ENCODE measurements at regions of chr13 and their contacts with region 1.

Region 1: DNA sequence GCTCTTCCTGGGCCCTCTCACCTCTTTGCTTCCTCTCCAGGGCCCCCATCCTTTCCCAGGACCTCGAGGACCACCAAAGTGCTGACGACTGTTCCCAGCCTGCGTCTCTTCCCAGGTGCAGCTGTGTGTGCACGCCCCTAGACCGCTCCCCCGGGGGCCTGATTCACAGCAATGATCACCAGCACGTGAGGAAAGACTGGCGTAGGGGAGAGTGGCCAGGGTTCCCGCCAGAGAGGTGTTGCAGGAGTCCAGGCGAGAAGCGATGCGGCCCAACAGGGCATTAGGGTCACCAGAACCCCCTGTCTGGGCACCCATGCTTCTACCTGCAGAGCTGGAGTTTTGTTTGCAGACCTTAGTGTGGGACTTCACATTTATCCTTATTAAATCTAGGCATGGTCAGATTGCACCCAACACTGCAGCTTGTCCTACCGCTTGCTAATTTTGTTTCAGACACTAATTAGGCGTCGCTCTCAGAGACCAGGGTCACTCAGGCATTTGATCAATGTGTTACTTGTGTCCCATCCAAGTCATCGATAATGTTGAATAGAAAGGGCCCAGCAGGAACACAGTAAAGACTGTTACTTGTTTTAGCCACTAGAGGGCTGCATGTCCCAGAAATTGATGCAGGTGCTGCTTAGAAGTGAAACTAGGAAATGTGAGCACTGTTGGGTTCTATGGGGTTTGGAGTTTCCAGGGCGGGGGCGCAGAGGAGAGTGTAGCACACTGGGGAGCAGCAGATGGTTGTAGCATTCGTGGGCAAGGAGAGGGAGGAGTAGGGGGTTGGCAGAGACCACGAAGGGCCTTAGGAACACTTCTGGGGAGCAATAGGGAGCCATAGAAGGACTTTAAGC is 53.2 kb downstream of the CDADC1 start:
- DNase-seq: peak; percentile 77
- H3K4me3 Mint-ChIP-seq: peak overlapping the region; percentile 27
- H3K27ac Mint-ChIP-seq: peak overlapping the region; percentile 46
- H3K4me1 Mint-ChIP-seq: peaks cover 21% of the 10 kb centered on the region
- H3K27me3 Mint-ChIP-seq: peaks cover 4% of the 10 kb centered on the region

Region 2: DNA sequence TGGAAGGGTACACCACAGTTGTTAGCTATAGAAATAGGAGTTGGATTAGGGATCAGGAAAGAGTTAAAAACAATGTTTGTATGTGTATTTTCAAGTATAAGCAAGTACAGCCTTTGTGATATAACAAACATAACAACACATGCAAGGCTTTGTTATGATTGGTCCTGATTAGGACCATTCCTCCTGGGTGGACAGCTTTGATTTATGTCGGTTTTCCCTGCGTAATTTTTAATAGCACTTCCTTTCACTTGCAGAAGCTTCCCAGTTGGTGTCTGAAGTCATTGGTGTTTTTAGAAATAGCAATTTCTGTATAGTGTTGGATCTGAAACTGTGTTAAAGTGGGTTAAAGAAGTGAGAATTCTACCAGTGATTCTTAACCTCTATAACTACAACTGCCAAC is 315.2 kb before region 1 on chr13:
- CTCF ChIA-PET with region 1: no interaction called
- DNase-seq: no peak
- H3K4me3 Mint-ChIP-seq: no peak overlapping the region
- H3K27ac Mint-ChIP-seq: peak overlapping the region; percentile 47
- H3K4me1 Mint-ChIP-seq: peaks cover 9% of the 10 kb centered on the region
- H3K27me3 Mint-ChIP-seq: no peaks in the 10 kb centered on the region

Region 3: DNA sequence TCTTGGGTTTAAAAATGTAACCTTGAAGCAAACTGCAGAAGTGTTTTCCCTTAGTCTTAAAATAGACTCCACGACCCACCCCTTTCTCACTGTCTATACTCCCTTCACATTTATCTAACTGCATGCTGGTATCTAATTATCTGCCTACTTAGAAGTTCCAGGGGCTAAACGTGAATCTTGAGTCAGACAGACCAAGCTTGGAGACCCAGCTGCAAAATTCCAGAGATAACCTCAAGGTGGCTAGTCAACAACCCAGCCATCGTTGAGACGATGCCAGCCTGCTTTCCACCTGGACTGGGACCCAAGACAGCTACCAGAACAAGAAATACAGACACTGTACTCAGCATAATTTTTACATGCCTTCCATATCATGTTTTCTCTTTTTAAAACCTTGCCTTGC is 28.9 kb after region 1 on chr13:
- CTCF ChIA-PET with region 1: no interaction called
- DNase-seq: no peak
- H3K4me3 Mint-ChIP-seq: no peak overlapping the region
- H3K27ac Mint-ChIP-seq: no peak overlapping the region
- H3K4me1 Mint-ChIP-seq: no peaks in the 10 kb centered on the region
- H3K27me3 Mint-ChIP-seq: peaks cover 5% of the 10 kb centered on the region

Region 4: DNA sequence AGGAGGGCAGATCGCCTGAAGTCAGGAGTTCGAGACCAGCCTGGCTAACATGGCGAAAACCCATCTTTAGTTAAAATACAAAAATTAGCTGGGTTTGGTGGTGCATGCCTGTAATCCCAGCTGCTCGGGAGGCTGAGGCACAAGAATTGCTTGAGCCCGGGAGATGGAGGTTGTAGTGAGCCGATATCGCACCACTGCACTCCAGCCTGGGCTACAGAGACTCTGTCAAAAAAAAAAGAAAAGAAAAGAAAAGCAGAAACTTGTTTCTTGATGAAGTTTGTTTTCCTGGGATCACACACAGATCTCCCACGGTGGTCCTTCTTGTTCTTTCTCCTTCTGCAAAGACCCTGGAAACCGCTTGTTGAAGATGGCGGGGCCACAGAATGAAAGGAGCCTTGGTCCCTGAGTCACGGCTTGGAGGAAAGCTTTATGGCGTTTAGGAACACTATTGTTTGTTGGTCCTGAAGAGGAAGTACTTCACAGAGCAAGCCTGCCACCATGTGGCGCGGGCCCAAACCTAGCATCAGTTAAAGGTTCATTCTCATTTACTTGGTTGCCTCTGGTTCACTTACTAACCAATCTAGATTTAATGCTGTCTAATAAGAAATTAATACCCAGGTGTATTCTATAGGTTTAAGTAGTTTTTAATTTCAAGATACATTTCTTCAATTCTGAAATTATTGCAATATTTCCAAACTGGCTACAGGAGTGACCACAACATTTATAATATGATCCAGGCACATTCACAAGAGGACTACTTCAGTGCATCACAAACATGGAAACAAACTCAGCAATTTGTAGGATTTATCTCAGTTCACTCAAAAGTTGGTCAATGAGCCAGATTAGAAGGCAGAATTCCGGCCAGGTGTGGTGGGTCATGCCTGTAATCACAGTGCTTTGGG is 306.0 kb after region 1 on chr13:
- CTCF ChIA-PET with region 1: interaction called, 14 read pairs
- DNase-seq: peak; percentile 88
- H3K4me3 Mint-ChIP-seq: peak overlapping the region; percentile 76
- H3K27ac Mint-ChIP-seq: peak overlapping the region; percentile 8
- H3K4me1 Mint-ChIP-seq: peaks cover 5% of the 10 kb centered on the region
- H3K27me3 Mint-ChIP-seq: peaks cover 6% of the 10 kb centered on the region

Region 5: DNA sequence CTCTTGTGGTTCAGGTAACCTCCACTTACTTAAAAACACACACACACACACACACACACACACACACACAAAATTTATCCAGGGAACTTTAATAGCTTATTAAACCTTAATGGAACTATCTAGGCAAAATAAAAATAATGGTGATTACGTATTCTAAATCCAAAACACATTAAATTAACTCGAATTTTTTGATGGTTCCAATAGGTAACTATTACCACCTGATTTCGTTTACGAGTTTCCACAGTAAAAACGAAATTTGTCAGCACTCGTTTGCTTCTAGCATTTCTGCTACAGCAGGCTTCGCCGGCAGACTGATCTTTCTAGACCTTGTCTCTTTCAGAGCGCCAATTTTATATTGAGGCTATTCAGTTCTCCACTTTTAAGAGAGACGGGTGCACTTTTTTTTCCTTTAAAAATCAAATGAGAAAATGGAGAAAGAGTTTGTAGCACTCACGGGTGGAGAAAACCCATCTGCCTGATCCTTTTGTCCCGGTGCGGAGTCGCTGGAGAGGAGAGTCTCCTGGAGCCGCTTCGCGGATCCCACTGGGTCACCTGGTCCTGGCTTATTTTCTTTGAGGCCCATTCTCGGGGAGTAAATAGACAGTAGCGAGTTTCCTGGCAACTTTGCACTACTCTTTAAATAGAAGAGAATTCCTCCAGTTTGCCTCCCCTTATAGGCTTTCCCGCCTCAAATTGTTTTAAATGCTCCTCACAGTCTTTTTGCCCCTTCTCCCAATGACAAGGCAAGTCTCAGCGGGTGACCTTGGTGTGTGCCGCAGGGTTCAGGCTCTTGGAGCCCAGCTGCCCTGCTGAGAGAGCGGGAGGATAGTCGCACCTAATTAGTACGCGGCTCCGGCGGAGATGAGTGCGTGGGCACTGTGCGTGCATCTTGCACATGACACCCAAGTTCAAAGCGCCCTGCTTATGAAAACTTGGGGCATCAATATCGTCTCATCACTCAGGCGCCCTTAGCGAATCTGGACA is 831.2 kb after region 1 on chr13:
- CTCF ChIA-PET with region 1: no interaction called
- DNase-seq: peak; percentile 26
- H3K4me3 Mint-ChIP-seq: no peak overlapping the region
- H3K27ac Mint-ChIP-seq: peak overlapping the region; percentile 78
- H3K4me1 Mint-ChIP-seq: peaks cover 54% of the 10 kb centered on the region
- H3K27me3 Mint-ChIP-seq: peaks cover 87% of the 10 kb centered on the region